Left cardiac atrium (tissue), 4 donors: ENCODE measurements at regions of chr14 and their contacts with region 1.

Region 1: GRCh38 chr14:81269100-81269978 is 48.6 kb upstream of the GTF2A1 start:
- DNase-seq: no peak
- ATAC-seq: peak; percentile 47 to 83

Region 2: DNA sequence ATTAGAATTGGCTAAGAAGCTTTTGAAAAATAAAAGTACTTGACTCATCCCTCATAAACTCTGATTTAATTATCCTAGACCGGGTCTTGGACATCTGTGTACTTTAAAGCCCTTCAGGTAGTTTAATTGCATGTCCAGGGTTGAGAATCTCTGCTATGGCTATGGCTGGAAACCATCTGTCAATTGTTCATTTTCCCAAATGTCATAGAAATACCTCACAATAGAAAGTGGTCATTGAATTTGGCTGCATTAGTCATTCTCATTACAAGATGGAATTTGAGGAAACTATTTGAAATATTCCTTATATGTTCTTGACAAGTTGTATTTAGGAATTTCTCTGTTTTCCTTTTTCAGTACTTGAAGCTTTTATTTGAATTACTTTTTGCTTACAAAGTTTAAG is 202.7 kb before region 1 on chr14:
- intact Hi-C with region 1: no loop called
- DNase-seq: no peak
- ATAC-seq: no peak

Region 3: GRCh38 chr14:81211844-81212243 is 57.5 kb before region 1 on chr14:
- intact Hi-C with region 1: no loop called
- DNase-seq: peak; percentile 43
- ATAC-seq: peak; percentile 48 to 74

Region 4: DNA sequence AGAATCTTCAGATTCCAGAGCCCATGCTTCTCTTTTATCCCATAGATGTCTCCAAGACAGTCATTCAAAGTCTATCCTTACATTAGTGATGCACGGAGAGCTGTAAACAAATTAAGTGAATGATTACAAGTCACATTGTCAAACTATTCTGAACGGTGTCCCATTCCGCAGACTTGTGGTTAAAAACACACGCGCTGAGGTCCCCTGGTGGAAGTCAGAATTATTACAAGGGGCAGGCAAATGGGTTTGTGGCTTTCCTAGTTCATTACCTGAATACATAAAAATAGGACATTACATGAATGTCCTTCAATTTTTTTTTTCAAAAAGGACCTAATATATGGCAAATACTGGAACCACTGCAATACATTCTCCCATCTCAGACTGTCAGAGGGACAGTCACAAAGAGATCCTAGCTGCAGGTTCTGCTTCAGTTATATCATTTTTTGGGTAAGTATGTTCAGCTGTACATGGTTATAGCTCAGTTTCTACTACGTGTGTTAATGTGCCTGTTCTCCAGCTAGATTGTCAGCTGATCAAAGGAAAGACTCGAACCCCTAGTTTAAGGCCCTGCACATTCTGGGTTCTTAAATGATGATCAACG is 183.9 kb after region 1 on chr14:
- intact Hi-C with region 1: loop called (anchors 5 kb)
- DNase-seq: peak; percentile 35
- ATAC-seq: peak; percentile 33 to 39

Region 5: GRCh38 chr14:81464247-81465002 is 195.1 kb after region 1 on chr14:
- intact Hi-C with region 1: loop called (anchors 2 to 5 kb)
- DNase-seq: no peak
- ATAC-seq: peak; percentile 56 to 66

Region 6: GRCh38 chr14:81485372-81485771 is 216.0 kb after region 1 on chr14:
- intact Hi-C with region 1: no loop called
- DNase-seq: no peak
- ATAC-seq: no peak

Region 7: GRCh38 chr14:81506487-81506886 is 237.1 kb after region 1 on chr14:
- intact Hi-C with region 1: no loop called
- DNase-seq: no peak
- ATAC-seq: no peak